HCT116 (cell line): ENCODE measurements at regions of chr13 and their contacts with region 1.

Region 1: GRCh38 chr13:67736646-67737420 is 506.7 kb upstream of the PCDH9 start:
- DNase-seq: no peak
- ATAC-seq: no peak
- H3K4me3 ChIP-seq: no peak overlapping the region
- H3K27ac ChIP-seq: no peak overlapping the region
- H3K4me1 ChIP-seq: no peaks in the 10 kb centered on the region
- H3K27me3 ChIP-seq: no peaks in the 10 kb centered on the region
- CTCF ChIP-seq: peak in 2 of 3 experiments; percentile 26 to 47; a peak in 3 of 6 replicates
- POLR2A ChIP-seq: no peak
- RAD21 ChIP-seq: peak; percentile 32

Region 2: GRCh38 chr13:67186995-67187569 is 549.8 kb before region 1 on chr13:
- CTCF ChIA-PET with region 1: no interaction called
- POLR2A ChIA-PET with region 1: no interaction called
- RAD21 ChIA-PET with region 1: no interaction called
- intact Hi-C with region 1: no loop called
- DNase-seq: no peak
- ATAC-seq: no peak
- H3K4me3 ChIP-seq: no peak overlapping the region
- H3K27ac ChIP-seq: no peak overlapping the region
- H3K4me1 ChIP-seq: no peaks in the 10 kb centered on the region
- H3K27me3 ChIP-seq: no peaks in the 10 kb centered on the region
- CTCF ChIP-seq: no peak
- POLR2A ChIP-seq: no peak
- RAD21 ChIP-seq: no peak

Region 3: DNA sequence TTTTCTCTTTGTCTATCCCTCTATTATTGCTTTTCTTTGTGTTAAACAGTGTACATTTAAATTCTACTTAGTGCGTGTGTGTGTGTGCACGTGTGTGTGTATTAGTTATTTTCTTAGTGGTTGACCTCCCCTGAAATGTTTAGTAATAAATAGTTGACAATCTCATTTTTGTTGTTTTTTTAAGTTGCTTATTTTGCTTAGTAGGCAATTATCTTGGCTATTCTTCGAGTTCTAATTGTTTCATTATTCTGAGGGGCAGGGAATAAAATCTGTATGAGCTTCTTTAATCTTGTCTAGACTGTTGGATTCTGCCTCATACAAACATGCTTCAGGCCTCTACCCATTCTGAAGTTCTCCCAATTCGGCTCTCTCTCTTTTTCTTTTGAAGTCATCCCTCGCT is 1201.8 kb after region 1 on chr13:
- CTCF ChIA-PET with region 1: no interaction called
- POLR2A ChIA-PET with region 1: no interaction called
- RAD21 ChIA-PET with region 1: no interaction called
- intact Hi-C with region 1: loop called (anchors 10 kb)
- DNase-seq: no peak
- ATAC-seq: no peak
- H3K4me3 ChIP-seq: no peak overlapping the region
- H3K27ac ChIP-seq: no peak overlapping the region
- H3K4me1 ChIP-seq: no peaks in the 10 kb centered on the region
- H3K27me3 ChIP-seq: no peaks in the 10 kb centered on the region
- CTCF ChIP-seq: no peak
- POLR2A ChIP-seq: no peak
- RAD21 ChIP-seq: no peak